BJ (cell line): ENCODE measurements at regions of chr2 and their contacts with region 1.

Region 1: GRCh38 chr2:120174963-120175581 is 48.1 kb downstream of the TMEM185B start:
- DNase-seq: peak; percentile 2
- H3K4me3 ChIP-seq: no peak overlapping the region
- H3K27me3 ChIP-seq: no peaks in the 10 kb centered on the region; the same call in 1 of the 2 replicates
- CTCF ChIP-seq: peak; percentile 64

Region 2: DNA sequence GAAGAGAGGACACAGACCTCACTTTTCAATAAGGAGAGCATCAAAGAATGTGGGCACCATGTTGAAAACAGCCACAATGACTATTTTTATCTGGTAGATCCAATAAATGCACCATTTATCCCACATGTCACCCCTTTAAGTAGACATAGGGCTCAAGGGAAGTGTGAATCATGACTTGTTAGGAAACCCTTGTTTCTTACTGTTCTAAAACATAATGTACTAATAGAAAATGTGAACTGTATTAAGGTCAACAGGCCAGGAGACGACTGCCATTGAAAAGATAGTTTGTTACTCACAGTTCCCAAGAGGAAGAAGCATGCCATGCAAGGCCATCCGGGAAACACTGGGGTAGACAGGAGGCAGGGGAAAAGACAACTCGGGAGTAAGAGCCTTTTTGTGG is 1465.3 kb before region 1 on chr2:
- CTCF ChIA-PET with region 1: no interaction called
- POLR2A ChIA-PET with region 1: no interaction called
- DNase-seq: no peak
- H3K4me3 ChIP-seq: no peak overlapping the region
- H3K27me3 ChIP-seq: no peaks in the 10 kb centered on the region; the same call in 1 of the 2 replicates
- CTCF ChIP-seq: no peak

Region 3: DNA sequence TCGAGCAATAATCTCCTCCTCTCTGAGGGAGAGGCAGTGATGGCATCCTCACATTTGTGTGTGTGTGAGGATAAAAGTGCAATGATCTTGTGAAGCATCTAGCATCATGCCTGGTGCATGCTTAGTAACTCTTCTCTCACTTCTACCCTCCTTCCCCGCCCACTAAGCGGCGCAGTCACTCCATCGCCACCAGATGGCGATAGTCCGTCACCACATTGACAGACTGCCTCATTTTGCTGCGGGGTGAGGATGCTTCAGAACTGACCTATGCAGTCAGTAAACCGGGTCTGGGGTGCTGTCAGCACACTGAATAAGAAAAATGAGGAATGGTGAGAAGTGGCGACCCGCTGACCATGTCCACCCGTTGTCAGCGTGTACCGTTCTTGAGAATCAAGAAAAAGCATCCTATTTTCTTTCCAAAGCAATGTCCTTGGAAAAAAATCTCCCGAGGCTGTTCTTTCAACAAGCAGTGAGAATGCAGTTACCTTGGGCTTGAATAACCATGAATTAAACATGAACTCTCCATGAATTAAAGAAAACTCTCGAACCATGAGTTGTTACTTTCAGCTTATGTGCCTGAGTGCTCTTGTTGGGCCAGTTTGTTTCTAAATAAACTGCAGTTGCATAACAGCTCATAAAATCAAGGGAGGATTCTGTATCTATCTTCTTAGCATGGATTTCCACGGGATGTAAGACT is 533.4 kb before region 1 on chr2:
- CTCF ChIA-PET with region 1: interaction called, 40 read pairs
- POLR2A ChIA-PET with region 1: no interaction called
- DNase-seq: peak; percentile 13
- H3K4me3 ChIP-seq: no peak overlapping the region
- H3K27me3 ChIP-seq: peaks cover 15% of the 10 kb centered on the region
- CTCF ChIP-seq: peak; percentile 95

Region 4: GRCh38 chr2:119702918-119703401 is 472.1 kb before region 1 on chr2:
- CTCF ChIA-PET with region 1: interaction called, 52 read pairs
- POLR2A ChIA-PET with region 1: no interaction called
- DNase-seq: no peak
- H3K4me3 ChIP-seq: no peak overlapping the region
- H3K27me3 ChIP-seq: peaks cover 1% of the 10 kb centered on the region
- CTCF ChIP-seq: peak; percentile 98

Region 5: GRCh38 chr2:119753041-119753929 is 421.8 kb before region 1 on chr2:
- CTCF ChIA-PET with region 1: interaction called, 30 read pairs
- POLR2A ChIA-PET with region 1: interaction called, 3 read pairs
- DNase-seq: no peak
- H3K4me3 ChIP-seq: no peak overlapping the region
- H3K27me3 ChIP-seq: no peaks in the 10 kb centered on the region
- CTCF ChIP-seq: peak; percentile 67

Region 6: GRCh38 chr2:120109186-120110061 is 65.6 kb before region 1 on chr2:
- CTCF ChIA-PET with region 1: interaction called, 20 read pairs
- POLR2A ChIA-PET with region 1: no interaction called
- DNase-seq: no peak
- H3K4me3 ChIP-seq: no peak overlapping the region
- H3K27me3 ChIP-seq: no peaks in the 10 kb centered on the region
- CTCF ChIP-seq: no peak

Region 7: GRCh38 chr2:120261387-120262006 is 86.4 kb after region 1 on chr2:
- CTCF ChIA-PET with region 1: no interaction called
- POLR2A ChIA-PET with region 1: no interaction called
- DNase-seq: no peak
- H3K4me3 ChIP-seq: no peak overlapping the region
- H3K27me3 ChIP-seq: no peaks in the 10 kb centered on the region
- CTCF ChIP-seq: no peak